Mammary epithelial cell (primary cell): ENCODE measurements at regions of chr12 and their contacts with region 1.

Region 1: DNA sequence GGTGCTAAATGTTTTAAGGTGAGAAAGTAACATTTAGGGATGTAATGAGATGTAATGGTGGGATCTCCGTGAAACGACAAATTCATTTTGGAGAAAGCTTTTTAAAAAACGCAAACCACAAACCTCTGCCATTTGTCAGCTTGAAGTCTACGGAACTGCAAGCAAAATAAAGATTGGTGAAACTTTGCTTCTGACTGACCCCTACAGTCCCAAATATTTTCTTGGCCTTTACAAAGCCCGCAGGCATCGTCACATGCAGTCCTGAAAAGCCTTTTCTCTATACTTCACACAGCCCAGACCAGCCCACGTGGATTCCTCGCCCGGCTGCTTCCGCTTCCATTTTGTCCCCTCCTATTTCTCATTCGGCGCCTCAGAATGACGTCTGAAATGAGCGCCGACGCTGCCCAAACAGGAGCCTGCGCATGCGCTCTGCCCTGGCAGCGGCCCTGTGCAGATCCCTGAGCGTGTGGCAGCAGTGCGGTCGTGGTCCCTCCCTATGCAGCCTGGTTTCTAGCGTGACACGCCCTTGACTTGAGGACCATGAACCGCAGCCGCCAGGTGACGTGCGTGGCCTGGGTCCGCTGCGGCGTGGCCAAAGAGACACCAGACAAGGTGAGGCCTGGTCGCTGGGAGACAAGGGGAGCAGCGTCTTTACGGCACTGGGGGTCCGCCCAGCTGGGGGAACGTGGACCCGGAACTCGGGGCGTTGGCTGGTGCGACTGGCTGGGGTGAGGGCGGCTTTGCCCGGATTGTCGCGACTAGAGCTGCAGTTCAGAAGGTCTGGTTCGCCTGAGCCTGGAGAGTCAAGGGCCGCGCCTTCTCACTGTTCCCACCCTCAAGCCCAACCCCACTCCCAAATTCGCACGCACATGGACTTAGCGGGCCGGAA is at the start of gene PWP1:
- DNase-seq: peak; percentile 92
- H3K4me3 ChIP-seq: peak within 1 kb of the TSS; percentile 80 to 90 (median 85)
- H3K27ac ChIP-seq: peak within 1 kb of the TSS; percentile 78
- H3K4me1 ChIP-seq: peaks cover 9% of the 10 kb centered on the region
- H3K27me3 ChIP-seq: no peaks in the 10 kb centered on the region
- CTCF ChIP-seq: no peak
- total RNA-seq, gene PWP1: 61.0 to 69.7 TPM

Region 2: GRCh38 chr12:107492393-107493134 is 193.0 kb before region 1 on chr12:
- CTCF ChIA-PET with region 1: no interaction called
- dilution Hi-C with region 1: no loop called
- in situ Hi-C with region 1: no loop called
- intact Hi-C with region 1: no loop called
- DNase-seq: no peak
- H3K4me3 ChIP-seq: no peak overlapping the region
- H3K27ac ChIP-seq: no peak overlapping the region
- H3K4me1 ChIP-seq: no peaks in the 10 kb centered on the region
- H3K27me3 ChIP-seq: no peaks in the 10 kb centered on the region
- CTCF ChIP-seq: no peak

Region 3: DNA sequence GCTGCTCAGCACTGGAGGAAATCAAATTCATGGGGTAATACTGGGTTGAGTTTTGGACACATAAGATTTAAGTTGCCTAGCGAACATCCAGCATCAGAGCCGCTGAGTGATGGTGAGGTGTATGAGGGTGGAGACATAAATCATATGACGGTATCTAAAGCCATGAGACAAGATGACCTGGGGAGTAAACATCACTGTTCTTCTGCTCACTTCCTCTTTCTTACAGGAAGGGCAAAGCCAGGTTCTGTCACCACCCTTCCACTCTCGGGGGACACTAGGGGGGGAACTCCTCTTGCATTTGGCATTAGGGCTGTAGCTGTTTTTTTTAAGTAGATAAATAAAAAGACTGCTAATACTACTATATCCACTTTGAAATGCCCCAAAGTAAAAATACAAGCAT is 51.3 kb after region 1 on chr12:
- CTCF ChIA-PET with region 1: no interaction called
- dilution Hi-C with region 1: loop called (anchors 5 kb)
- in situ Hi-C with region 1: no loop called
- intact Hi-C with region 1: loop called (anchors 10 kb)
- DNase-seq: no peak
- H3K4me3 ChIP-seq: no peak overlapping the region
- H3K27ac ChIP-seq: no peak overlapping the region
- H3K4me1 ChIP-seq: no peaks in the 10 kb centered on the region
- H3K27me3 ChIP-seq: no peaks in the 10 kb centered on the region
- CTCF ChIP-seq: no peak

Region 4: GRCh38 chr12:107748472-107748871 is 62.9 kb after region 1 on chr12:
- CTCF ChIA-PET with region 1: no interaction called
- dilution Hi-C with region 1: loop called (anchors 5 kb)
- in situ Hi-C with region 1: no loop called
- intact Hi-C with region 1: loop called (anchors 10 kb)
- DNase-seq: peak; percentile 68
- H3K4me3 ChIP-seq: no peak overlapping the region
- H3K27ac ChIP-seq: peak overlapping the region; percentile 65
- H3K4me1 ChIP-seq: peaks cover 26% of the 10 kb centered on the region
- H3K27me3 ChIP-seq: no peaks in the 10 kb centered on the region
- CTCF ChIP-seq: no peak

Region 5: DNA sequence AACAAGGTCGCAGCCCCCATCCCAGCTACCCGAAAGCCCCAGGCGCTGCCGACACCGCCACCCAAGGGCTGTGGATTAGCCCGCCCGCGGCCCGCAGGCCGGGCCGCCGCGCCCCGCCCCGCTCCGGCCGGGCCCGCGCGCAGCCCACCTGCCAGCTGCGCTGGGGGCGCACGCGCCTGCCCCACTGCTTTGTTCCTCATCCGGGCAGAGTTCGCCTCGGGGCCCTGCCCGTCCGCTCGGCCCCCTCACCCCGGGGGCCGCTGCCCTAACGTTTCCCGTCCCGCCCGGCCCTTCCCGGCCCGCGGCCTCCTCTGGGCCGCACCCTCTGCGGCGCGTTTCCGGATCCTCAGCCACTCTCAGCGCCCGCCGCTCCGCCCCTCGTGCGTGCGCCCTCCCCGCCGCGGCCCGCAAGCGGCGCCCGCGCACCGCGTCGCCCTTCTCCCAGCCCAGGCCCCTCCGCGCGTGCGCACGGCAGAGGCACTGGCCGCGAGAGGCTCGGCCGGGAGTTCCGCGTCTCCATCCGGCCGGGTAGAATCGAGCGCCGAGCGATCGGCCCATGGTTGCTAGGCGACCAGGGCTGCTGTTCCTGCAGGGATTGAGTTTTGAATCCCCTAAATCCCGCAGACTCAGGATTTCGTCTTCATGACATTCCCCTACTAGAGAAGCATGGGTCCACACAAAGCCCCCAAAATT is 75.4 kb after region 1 on chr12 and contains the start of gene PRDM4:
- CTCF ChIA-PET with region 1: no interaction called
- dilution Hi-C with region 1: no loop called
- in situ Hi-C with region 1: no loop called
- intact Hi-C with region 1: loop called (anchors 1 kb)
- DNase-seq: peak; percentile 91
- H3K4me3 ChIP-seq: peak within 1 kb of the TSS; percentile 71 to 92 (median 75)
- H3K27ac ChIP-seq: peak within 1 kb of the TSS; percentile 90
- H3K4me1 ChIP-seq: peaks cover 21% of the 10 kb centered on the region
- H3K27me3 ChIP-seq: no peaks in the 10 kb centered on the region
- CTCF ChIP-seq: peak; percentile 23 to 33
- total RNA-seq, gene PRDM4: 25.3 to 32.3 TPM

Region 6: DNA sequence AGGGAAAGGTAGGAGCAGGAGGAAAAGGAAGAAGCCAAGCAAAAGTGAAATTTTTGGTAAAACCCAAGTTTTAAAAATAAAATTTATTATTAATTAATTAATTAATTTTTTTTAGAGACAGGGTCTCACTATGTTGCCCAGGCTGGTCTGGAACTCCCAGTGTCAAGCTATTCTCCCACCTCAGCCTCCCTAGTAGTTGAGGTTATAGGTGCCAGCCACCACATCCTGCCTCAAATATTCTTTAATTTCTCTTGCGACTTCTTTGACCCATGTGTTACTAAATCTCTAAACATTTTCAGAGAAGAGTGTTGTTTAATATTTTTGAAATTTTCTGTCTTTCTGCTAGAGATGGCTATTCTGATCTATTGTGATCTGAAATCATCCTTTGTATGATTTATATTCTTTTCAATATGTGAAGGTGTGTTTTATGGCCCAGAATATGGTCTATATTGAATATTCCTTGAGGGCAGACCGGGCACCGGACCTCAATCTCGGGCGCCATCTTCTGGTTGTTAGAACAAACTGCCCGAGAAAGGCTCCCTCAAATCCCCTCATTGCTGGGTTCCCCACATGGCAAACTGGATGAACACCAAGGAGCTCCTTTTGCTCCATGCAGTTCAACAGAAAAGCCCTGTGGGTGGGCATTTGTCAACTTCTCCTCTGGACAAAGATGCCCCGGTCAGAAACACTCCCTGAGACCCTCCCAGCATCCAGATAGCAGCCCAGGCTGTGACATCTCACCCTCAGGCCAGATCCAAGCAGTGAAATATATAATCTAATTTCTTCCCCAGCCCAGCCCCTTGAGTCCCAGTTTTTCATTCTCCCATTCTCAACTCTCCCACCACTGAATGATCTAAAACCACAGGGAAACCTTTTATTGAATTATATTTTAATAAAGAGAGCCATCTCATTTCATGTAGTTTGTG is 199.4 kb after region 1 on chr12:
- CTCF ChIA-PET with region 1: no interaction called
- dilution Hi-C with region 1: no loop called
- in situ Hi-C with region 1: loop called in 1 of 2 experiments (anchors 10 kb)
- intact Hi-C with region 1: no loop called
- DNase-seq: peak; percentile 12
- H3K4me3 ChIP-seq: no peak overlapping the region
- H3K27ac ChIP-seq: no peak overlapping the region
- H3K4me1 ChIP-seq: no peaks in the 10 kb centered on the region
- H3K27me3 ChIP-seq: peaks cover 9% of the 10 kb centered on the region
- CTCF ChIP-seq: peak; percentile 71 to 82